ENCODE measurements at regions of chr2 and their contacts with region 1.

Region 1: DNA sequence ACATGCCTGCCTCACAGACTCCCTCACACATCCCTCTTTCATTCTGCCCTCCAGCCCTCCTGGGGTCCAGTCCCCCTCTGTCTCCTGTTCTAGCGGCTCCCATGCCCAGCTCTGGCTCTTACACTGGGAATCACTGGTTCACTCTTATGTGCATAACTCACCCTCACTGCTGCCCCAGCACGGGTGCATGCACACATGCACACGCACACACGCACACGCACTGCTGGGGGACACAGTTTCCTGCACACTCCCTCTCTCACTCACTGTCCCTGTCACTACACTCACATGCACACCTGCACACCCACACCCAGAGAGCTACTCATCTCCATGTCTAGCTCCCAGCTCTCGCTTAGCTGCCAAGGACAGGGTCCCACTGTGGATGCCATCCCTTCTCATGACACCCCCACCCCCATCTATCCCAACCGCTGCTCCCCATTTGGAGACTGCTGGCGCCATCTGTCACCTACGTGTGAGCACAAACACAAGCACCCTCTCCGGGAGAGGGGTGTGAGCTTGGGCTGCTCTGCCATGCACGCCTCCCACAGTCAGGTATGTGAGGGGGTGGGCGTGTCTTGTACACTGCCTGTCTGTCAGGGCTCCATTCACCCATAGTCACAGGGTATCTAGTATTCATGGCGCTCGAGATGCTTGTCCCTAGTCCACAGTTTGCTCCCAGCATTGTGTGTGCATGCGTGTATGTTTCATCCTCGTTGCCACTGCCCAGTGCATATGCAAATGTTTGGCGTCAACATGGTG is 1.8 kb downstream of the ASIC4 start:
- DNase-seq: no peak
- ATAC-seq: no peak
- H3K4me3 ChIP-seq: no peak overlapping the region
- H3K27ac ChIP-seq: no peak overlapping the region
- H3K4me1 ChIP-seq: peaks cover 0 to 6% of the 10 kb centered on the region in 2 donors
- H3K27me3 ChIP-seq: peaks cover 24 to 35% (median 25%) of the 10 kb centered on the region in 3 donors
- CTCF ChIP-seq: no peak
- POLR2A ChIP-seq: no peak

Region 2: DNA sequence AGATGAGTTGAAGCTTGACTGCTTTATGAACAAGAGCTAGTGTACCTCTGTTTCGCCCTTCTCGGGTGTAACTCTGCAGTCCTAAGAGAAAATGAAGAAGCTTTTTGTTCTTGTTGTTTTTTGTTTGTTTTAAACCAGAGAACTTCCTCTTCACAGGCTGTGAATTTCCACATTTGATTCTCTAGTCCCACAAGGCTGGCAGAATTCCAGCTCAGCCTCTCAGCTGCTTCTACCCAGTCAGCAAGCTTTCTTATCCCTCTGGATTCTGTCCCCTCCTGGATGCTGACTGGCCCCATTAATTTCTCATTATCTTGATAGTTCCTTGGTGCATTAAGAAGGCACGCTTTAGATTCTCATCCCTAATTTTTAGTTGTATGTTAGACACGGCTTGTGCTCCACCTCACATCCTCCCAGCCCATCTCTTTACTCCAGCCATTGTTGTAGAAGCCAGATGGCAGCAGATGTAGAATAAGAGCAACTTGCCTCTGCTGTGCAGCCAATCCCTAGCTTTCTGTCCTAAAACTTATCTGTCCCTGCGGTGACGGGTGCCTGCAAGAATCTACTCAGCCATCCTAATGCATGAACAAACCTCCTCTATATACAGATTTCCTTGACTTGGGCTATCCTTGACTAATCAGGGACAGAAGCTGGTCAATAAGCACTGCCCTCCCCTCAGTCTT is 171.2 kb before region 1 on chr2:
- in situ Hi-C with region 1: no loop called
- intact Hi-C with region 1: no loop called
- DNase-seq: peak; percentile 10 to 24
- ATAC-seq: no peak
- H3K4me3 ChIP-seq: no peak overlapping the region
- H3K27ac ChIP-seq: no peak overlapping the region
- H3K4me1 ChIP-seq: no peaks in the 10 kb centered on the region
- H3K27me3 ChIP-seq: peaks cover 0 to 2% (median 0%) of the 10 kb centered on the region in 3 donors
- CTCF ChIP-seq: no peak
- POLR2A ChIP-seq: no peak

Region 3: DNA sequence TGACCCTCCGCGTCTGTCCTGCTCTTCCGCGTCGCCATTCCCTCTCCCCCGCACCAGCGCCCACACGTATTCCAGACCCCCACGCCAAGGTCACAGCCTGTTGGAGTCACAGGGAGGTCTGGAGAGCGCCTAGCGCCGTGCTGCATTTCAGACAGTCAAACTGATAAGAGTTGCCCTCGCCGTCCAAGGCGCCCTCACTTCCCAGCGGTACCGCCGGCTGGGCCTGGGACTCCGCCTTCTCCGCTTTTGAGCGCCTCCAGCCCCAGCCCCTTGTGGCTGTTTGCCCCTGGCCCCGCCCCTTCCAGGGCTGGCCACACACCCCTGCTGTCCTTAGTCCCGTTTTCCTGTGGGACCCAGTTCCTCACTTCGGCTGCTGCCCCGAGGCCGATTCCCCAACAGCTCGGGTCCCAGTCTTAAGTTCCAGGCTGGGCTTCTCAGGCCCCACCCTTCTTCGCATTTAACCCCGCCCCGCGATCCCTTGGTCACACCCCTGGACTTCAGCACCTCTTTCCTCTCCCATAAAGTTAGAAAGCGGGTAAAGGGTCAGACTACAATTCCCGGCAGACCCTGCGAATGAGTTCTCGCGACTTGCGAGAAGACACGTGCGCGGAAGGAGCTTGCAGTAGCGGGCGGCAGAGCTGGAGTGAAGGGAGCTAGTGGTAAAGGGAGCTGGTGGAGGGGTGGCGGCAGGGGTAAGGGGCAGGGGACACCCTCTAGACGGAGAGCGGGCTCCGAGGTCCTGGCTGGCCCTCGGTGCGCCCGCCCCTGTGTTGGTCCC is 17.6 kb before region 1 on chr2 and contains the start of gene GMPPA:
- in situ Hi-C with region 1: no loop called
- intact Hi-C with region 1: no loop called
- DNase-seq: peak; percentile 97 to 98
- ATAC-seq: peak; percentile 82 to 88
- H3K4me3 ChIP-seq: peak within 1 kb of the TSS; percentile 66 to 87 (median 74)
- H3K27ac ChIP-seq: peak within 1 kb of the TSS; percentile 91 to 100 (median 96)
- H3K4me1 ChIP-seq: peaks cover 39 to 46% of the 10 kb centered on the region in 2 donors
- H3K27me3 ChIP-seq: no peaks in the 10 kb centered on the region
- CTCF ChIP-seq: peak in 1 of 5 experiments; percentile 25
- POLR2A ChIP-seq: peak; percentile 83 to 89
- total RNA-seq, gene GMPPA: 18.0 to 25.8 (median 24.4) TPM

Region 4: DNA sequence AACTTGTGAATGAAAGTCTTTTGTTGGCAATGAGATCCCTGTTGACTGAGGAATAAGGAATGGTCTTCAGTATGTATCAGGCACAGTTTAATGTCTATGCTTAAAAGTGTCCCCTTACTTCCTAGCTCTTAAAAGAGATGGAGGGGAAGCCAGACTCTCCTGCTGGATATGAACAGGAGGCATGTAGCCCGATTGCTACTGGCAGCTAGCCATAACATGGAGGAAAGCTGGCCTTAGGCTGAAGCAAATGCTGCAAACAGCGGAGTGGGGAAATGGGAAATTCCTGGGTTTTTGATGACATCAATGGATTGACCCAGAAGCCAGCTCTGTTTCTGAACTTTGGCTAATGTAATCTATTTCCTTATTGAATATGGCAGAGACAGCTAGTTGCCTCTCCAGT is 377.5 kb after region 1 on chr2:
- in situ Hi-C with region 1: no loop called
- intact Hi-C with region 1: loop called (anchors 5 kb)
- DNase-seq: no peak
- ATAC-seq: no peak
- H3K4me3 ChIP-seq: no peak overlapping the region
- H3K27ac ChIP-seq: no peak overlapping the region
- H3K4me1 ChIP-seq: no peaks in the 10 kb centered on the region
- H3K27me3 ChIP-seq: no peaks in the 10 kb centered on the region
- CTCF ChIP-seq: no peak
- POLR2A ChIP-seq: no peak

Measured in gastrocnemius medialis (tissue), 4 donors.